ENCODE measurements at regions of chr1 and their contacts with region 1.

Region 1: DNA sequence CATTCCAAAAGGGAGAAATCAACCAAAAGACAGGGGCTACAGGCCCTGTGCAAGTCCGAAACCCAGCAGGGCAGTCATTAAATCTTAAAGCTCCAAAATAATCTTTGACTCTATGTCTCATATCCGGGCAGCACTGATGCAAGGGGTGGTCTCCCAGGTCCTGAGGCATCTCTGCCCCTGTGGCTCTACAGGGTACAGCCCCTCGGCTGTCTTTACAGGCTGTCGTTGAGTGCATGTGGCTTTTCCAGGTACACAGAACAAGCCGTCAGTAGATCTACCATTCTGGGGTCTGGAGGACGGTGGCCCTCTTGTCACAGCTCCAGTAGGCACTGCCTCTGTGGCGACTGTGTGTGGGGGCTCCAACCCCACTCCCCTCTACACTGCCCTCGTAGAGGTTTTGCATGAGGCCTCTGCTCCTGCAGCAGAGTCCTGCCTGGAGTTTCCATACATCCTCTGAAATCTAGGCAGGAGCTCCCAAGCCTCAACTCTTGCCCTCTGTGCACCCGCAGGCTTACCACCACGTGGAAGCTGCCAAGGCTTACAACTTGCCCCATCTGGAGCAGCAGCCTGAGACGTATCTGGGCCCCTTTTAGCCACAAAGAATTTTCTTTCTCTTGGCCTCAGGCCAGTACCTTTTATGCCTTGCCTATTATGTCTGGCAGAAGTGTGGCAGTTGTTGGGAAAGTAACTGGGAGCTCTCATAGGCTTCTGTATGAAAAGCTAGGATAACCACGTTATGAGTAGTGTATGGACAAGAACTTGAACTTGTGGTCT is 52.5 kb downstream of the POU2F1 start:
- DNase-seq: no peak
- H3K4me3 ChIP-seq: no peak overlapping the region
- H3K27ac ChIP-seq: no peak overlapping the region
- H3K4me1 ChIP-seq: peaks cover 0 to 57% (median 31%) of the 10 kb centered on the region in 4 donors
- H3K27me3 ChIP-seq: no peaks in the 10 kb centered on the region
- CTCF ChIP-seq: no peak
- EP300 ChIP-seq: no peak
- POLR2A ChIP-seq: no peak

Region 2: GRCh38 chr1:167066333-167067122 is 206.7 kb before region 1 on chr1:
- intact Hi-C with region 1: loop called (anchors 5 kb)
- DNase-seq: peak; percentile 79
- H3K4me3 ChIP-seq: peak overlapping the region in 2 of 4 donors; percentile 21 to 29
- H3K27ac ChIP-seq: no peak overlapping the region
- H3K4me1 ChIP-seq: peaks cover 0 to 7% (median 5%) of the 10 kb centered on the region in 4 donors
- H3K27me3 ChIP-seq: no peaks in the 10 kb centered on the region
- CTCF ChIP-seq: peak; percentile 76 to 96 (median 83)
- EP300 ChIP-seq: no peak
- POLR2A ChIP-seq: no peak

Region 3: GRCh38 chr1:167442124-167442848 is 169.1 kb after region 1 on chr1:
- intact Hi-C with region 1: loop called (anchors 1 kb)
- DNase-seq: peak; percentile 87
- H3K4me3 ChIP-seq: no peak overlapping the region
- H3K27ac ChIP-seq: no peak overlapping the region
- H3K4me1 ChIP-seq: peaks cover 0 to 12% (median 9%) of the 10 kb centered on the region in 4 donors
- H3K27me3 ChIP-seq: peaks cover 0 to 20% (median 3%) of the 10 kb centered on the region in 3 donors
- CTCF ChIP-seq: peak; percentile 57 to 82 (median 76)
- EP300 ChIP-seq: no peak
- POLR2A ChIP-seq: no peak

Region 4: GRCh38 chr1:167454894-167455785 is 181.9 kb after region 1 on chr1:
- intact Hi-C with region 1: loop called (anchors 5 kb)
- DNase-seq: peak; percentile 82
- H3K4me3 ChIP-seq: peak overlapping the region; percentile 53 to 81 (median 72)
- H3K27ac ChIP-seq: peak overlapping the region; percentile 76 to 87 (median 80)
- H3K4me1 ChIP-seq: peaks cover 0 to 8% (median 5%) of the 10 kb centered on the region in 4 donors
- H3K27me3 ChIP-seq: no peaks in the 10 kb centered on the region
- CTCF ChIP-seq: no peak
- EP300 ChIP-seq: no peak
- POLR2A ChIP-seq: peak in 1 of 2 donors; percentile 19

Measured in sigmoid colon (tissue), 7 donors.